Activated CD4-positive, alpha-beta T cell treated with anti-CD3 and anti-CD28 coated beads for 36 hours (primary cell): ENCODE measurements at regions of chr5 and their contacts with region 1.

Region 1: DNA sequence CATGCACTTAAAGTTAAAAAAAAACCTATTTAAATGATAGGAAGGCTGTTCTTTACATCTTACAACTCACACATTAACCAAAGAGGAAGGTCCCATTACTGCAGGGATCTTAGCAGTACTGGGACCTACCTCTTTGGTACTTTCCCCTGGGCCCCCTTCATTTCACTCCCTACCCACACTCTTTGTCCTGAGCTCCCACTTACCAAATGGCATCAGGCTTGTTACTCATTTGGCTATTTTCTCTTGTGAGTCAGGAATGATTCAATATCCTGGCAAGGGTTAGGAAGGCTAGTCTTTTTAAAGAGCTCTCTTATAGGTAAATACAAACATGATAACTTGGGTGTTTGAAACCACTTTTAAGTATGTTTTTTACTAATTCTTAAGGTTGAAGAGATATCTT is 117.4 kb upstream of the ELL2 start:
- DNase-seq: peak; percentile 66
- ATAC-seq: peak; percentile 97
- H3K4me3 Mint-ChIP-seq: no peak overlapping the region
- H3K27ac Mint-ChIP-seq: peak overlapping the region; percentile 83
- H3K4me1 Mint-ChIP-seq: peaks cover 42% of the 10 kb centered on the region
- H3K27me3 Mint-ChIP-seq: peaks cover 18% of the 10 kb centered on the region

Region 2: GRCh38 chr5:96067894-96068614 is 11.0 kb before region 1 on chr5:
- CTCF ChIA-PET with region 1: interaction called, 3 read pairs
- POLR2A ChIA-PET with region 1: interaction called, 8 read pairs
- intact Hi-C with region 1: loop called (anchors 1 kb)
- DNase-seq: peak; percentile 36
- ATAC-seq: peak; percentile 62
- H3K4me3 Mint-ChIP-seq: no peak overlapping the region
- H3K27ac Mint-ChIP-seq: peak overlapping the region; percentile 87
- H3K4me1 Mint-ChIP-seq: peaks cover 52% of the 10 kb centered on the region
- H3K27me3 Mint-ChIP-seq: no peaks in the 10 kb centered on the region